ENCODE measurements at regions of chr6 and their contacts with region 1.

Region 1: DNA sequence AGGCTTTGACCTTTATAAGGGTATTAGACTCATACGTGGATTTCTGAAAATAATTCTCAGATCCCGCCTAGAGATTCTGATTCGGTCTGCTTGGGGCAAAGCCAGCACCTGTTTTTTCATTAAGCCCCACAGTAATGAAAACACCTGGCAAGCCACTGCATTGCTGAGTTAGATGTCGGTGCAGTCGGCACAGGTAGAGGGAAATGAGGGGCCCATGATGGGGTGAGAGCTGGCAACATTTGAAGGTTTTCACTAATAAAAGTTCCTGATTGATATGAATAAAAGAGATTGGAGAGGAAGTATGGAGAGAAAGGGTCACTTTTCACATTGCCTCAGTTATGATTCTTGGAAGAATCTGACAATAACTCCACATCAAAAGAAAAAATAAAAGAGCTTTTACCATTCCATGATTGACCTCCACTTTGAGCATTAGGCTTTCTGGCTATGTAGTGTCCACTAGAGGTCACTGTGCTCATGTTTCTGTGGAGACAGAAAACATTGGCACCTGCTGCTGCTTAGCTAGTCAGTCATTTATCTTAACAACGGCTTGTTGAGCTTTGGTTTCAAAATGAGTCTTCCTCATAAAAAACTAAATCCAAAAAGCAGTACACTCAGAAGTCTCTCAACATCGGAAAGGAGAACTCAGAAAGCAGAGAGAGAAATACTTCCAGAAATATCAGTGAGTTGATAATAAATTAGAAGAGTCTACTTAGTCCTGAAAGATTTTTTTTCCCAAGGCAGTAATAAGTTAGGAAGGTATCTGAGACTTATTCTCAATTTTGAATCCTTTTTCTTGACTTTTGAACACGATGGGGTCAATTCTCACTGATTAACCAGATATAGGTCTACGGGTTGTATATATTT is 53.3 kb upstream of the KLHL31 start:
- H3K4me3 ChIP-seq: no peak overlapping the region
- H3K27ac ChIP-seq: no peak overlapping the region
- H3K4me1 ChIP-seq: peaks cover 2% of the 10 kb centered on the region; the same call in 1 of the 2 replicates
- CTCF ChIP-seq: 0 out of 2 replicates have a peak, but pooled peaks have one; percentile 40

Region 2: GRCh38 chr6:53651764-53652401 is 66.9 kb before region 1 on chr6:
- CTCF ChIA-PET with region 1: interaction called, 34 read pairs
- POLR2A ChIA-PET with region 1: no interaction called
- H3K4me3 ChIP-seq: peak overlapping the region; percentile 66
- H3K27ac ChIP-seq: peak overlapping the region; percentile 56
- H3K4me1 ChIP-seq: no peaks in the 10 kb centered on the region; the same call in 1 of the 2 replicates
- CTCF ChIP-seq: peak; percentile 99

Region 3: DNA sequence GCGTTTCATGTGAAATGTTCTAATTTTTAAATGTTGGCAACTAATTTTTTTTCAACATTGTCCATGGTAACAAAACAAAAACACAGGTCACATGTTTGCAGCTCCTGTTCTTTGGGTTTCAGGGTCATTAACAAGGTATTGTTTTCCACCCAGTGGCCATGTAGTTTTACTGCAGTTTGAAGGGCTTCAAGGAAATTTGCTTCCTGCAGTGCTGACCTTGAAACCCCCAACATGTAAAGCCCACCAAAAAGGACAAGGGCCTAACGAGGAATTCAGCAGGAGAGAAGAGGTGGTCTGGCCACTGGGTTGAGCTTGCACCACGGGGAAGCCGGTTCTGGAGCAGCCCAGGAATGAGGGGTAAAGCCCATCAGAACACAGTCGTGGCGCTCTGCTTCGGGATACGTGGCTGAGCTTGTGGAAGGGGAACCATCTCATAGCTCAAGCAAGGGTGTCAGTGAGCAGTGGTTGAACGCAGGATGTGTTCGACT is 39.3 kb before region 1 on chr6:
- CTCF ChIA-PET with region 1: interaction called, 15 read pairs
- POLR2A ChIA-PET with region 1: interaction called, 5 read pairs
- H3K4me3 ChIP-seq: no peak overlapping the region
- H3K27ac ChIP-seq: no peak overlapping the region
- H3K4me1 ChIP-seq: no peaks in the 10 kb centered on the region
- CTCF ChIP-seq: no peak

Region 4: DNA sequence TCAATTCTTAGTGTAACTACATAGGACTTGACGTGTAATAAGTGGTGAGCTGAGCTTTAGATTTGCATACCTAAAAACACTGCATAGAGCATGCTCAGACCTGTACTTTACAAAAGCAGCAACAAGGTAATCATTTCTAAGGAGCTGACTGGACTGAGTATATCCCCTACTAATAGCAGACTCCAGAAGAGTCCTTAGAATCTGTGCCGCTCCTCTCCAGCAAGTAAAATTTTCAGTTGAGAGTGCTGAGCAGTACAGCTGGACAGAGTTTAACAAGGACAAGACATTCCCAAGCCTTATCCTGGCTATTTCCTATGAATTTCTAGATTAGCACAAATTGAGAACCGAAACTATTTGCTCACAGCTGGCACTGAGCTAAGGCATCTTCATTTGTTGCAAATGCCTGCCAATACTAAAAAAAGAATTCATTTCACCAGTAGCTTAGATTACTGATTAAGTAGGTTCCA is 27.1 kb before region 1 on chr6:
- CTCF ChIA-PET with region 1: interaction called, 19 read pairs
- POLR2A ChIA-PET with region 1: interaction called, 3 read pairs
- H3K4me3 ChIP-seq: no peak overlapping the region
- H3K27ac ChIP-seq: no peak overlapping the region
- H3K4me1 ChIP-seq: peaks cover 3% of the 10 kb centered on the region; the same call in 1 of the 2 replicates
- CTCF ChIP-seq: no peak

Region 5: DNA sequence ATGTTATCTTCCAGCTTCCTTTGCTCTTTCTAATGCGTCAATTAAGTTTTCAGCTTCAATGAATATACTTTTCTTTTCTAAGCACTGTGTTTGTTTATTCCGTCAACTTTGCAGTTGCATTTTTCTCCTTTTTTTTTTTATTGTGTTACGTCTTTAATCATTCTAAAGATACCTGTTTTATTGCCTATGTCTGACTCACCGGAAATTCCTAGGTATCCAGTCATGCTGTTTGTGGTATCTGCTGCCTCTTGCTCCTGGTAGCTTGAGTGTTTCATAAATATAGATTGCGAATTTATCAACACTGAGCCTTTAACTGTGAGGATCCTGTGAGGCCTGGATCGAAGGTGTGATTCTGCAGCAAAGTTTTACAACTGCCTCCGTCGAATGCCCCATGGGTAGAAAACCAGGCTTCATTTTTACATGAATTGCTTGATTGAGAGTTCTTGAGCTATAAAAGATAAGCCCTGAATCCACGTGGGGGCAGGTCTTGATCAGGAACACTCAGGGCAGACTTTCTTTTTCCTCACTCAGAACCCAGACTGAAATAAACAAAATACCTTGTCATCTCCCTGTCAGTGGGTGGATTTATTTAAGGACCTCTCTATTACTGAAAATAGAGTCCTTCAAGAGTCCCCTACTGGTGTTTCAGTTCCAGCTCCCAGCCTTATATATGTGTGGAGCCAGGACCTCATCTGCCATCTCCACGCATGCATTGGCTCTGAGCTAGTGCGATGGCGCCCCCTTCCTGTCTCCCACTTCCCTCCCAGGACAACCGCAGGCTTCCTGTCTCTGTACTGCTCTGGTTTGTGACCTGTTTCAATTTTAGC is 15.9 kb after region 1 on chr6:
- CTCF ChIA-PET with region 1: interaction called, 144 read pairs
- POLR2A ChIA-PET with region 1: no interaction called
- H3K4me3 ChIP-seq: peak overlapping the region; percentile 10; the same call in 1 of the 2 replicates
- H3K27ac ChIP-seq: peak overlapping the region; percentile 29; the same call in 1 of the 2 replicates
- H3K4me1 ChIP-seq: peaks cover 6% of the 10 kb centered on the region; the same call in 1 of the 2 replicates
- CTCF ChIP-seq: no peak